WTC11 (cell line): ENCODE measurements at regions of chr17 and their contacts with region 1.

Region 1: DNA sequence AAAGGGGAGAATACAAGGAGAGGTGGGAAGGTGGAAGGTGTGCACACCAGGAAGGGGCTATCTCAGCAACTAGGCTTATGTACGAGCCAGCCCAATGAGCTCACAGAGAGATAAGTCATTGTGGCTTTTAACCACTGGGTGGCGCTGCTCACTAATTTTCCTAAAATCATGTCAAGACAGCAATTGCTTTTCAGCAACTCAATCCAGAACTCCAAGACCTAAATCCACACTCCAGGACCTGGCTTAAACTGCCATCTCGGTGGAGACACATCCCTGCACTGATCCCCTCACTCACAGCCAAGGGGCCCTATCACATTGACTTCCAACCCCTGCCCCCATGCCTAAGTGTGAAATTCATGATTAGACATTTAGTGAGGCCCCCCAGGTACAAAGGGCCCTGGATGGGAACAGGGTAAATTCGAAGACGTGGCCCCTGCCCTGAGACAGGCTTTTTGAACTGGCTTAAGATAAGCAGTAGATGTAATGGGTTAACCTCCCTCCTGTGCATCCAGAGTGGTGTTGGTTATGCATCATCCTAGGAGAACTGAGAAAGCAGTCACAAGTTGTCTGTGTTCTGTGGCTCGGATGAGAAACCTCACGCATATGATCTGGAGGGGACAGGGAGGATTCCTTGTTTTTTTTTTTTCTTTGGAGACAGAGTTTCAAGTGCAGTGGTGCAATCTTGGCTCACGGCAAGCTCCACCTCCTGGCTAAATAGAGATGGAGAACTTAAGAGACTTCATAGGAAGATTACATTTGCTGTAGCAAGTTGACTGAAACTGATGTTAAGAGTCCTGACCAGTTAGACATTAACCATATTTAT is 11.5 kb downstream of the CCL16 start:
- DNase-seq: peak; percentile 88
- ATAC-seq: peak; percentile 92
- H3K4me3 Mint-ChIP-seq: no peak overlapping the region
- H3K27ac Mint-ChIP-seq: no peak overlapping the region
- H3K4me1 Mint-ChIP-seq: no peaks in the 10 kb centered on the region
- H3K27me3 Mint-ChIP-seq: peaks cover 3% of the 10 kb centered on the region; the same call in 1 of the 2 replicates
- CTCF ChIP-seq: peak; percentile 82

Region 2: DNA sequence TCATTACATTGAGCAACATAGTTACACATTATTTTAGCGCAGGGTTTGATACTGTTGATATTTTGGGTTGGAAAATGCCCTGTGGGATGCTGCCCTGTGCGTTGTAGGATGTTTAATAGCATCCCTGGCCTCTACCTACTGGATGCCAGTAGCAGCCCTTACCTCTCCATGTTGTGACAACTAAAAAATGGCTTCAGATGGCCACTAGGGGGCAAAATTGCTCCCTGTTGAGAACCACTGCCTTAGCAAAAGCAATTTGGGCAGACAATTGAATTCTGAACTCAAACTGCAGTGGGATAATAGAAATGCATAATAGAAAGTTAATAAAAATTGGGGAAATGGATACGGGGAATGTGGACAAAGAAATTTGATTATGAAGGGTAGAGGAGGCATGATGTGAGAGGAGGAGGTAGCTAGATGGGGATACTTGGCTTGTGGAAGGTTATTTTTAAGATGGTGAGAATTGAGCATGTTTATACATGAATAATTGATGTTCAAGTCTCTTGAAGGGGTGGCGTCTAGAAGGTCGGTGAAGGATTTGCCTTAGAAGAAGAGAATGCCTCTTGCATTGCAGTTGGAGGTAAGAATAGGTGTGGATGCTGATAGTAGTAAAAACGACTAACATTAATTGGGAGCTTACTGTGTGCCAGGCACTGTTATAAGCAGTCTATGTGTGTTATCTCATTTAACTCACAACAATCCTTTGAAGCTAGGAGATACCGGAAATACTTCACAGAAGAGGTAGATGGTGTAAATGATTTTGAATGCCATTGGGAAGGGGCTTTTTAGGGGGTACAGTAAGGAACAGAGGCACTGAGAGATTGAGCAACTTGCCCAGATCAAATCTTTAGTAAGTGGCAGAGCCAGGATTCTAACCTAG is 120.1 kb before region 1 on chr17:
- CTCF ChIA-PET with region 1: no interaction called
- POLR2A ChIA-PET with region 1: no interaction called
- DNase-seq: peak; percentile 50
- ATAC-seq: peak; percentile 81
- H3K4me3 Mint-ChIP-seq: no peak overlapping the region
- H3K27ac Mint-ChIP-seq: peak overlapping the region; percentile 83; the same call in 1 of the 2 replicates
- H3K4me1 Mint-ChIP-seq: peaks cover 14% of the 10 kb centered on the region
- H3K27me3 Mint-ChIP-seq: no peaks in the 10 kb centered on the region
- CTCF ChIP-seq: peak; percentile 80

Region 3: DNA sequence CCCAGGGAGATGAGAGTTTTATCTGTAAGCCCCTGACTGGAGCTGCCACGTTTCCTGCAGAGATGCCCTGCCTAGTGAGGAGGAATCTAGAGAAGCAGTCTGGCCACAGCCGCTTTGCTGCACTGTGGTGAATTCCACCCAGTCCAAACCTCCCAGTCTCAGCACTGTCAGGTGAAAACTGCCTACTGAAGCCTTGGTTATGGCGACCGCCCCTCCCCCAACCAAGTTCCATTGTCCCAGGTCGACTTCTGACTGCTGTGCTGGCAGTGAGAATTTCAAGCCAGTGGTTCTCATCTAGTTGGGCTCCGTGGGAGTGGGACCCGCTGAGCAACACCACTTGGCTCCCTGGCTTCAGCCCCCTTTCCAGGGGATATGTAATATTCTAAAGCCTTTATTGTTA is 16.0 kb before region 1 on chr17:
- CTCF ChIA-PET with region 1: interaction called, 14 read pairs
- POLR2A ChIA-PET with region 1: no interaction called
- DNase-seq: peak; percentile 40
- ATAC-seq: peak; percentile 24; the same call in 1 of the 2 replicates
- H3K4me3 Mint-ChIP-seq: no peak overlapping the region
- H3K27ac Mint-ChIP-seq: no peak overlapping the region
- H3K4me1 Mint-ChIP-seq: peaks cover 12% of the 10 kb centered on the region
- H3K27me3 Mint-ChIP-seq: no peaks in the 10 kb centered on the region; the same call in 1 of the 2 replicates
- CTCF ChIP-seq: no peak

Region 4: GRCh38 chr17:35981908-35982330 is 12.2 kb after region 1 on chr17:
- CTCF ChIA-PET with region 1: interaction called, 19 read pairs
- POLR2A ChIA-PET with region 1: no interaction called
- DNase-seq: peak; percentile 61
- ATAC-seq: peak; percentile 75
- H3K4me3 Mint-ChIP-seq: no peak overlapping the region
- H3K27ac Mint-ChIP-seq: no peak overlapping the region
- H3K4me1 Mint-ChIP-seq: no peaks in the 10 kb centered on the region
- H3K27me3 Mint-ChIP-seq: no peaks in the 10 kb centered on the region; the same call in 1 of the 2 replicates
- CTCF ChIP-seq: no peak